Activated CD8-positive, alpha-beta memory T cell treated with anti-CD3 and anti-CD28 coated beads, Interleukin-2, amount 10 ng/mL, durations not matched to agents 7 days and 5 days (primary cell): ENCODE measurements at regions of chr11 and their contacts with region 1.

Region 1: DNA sequence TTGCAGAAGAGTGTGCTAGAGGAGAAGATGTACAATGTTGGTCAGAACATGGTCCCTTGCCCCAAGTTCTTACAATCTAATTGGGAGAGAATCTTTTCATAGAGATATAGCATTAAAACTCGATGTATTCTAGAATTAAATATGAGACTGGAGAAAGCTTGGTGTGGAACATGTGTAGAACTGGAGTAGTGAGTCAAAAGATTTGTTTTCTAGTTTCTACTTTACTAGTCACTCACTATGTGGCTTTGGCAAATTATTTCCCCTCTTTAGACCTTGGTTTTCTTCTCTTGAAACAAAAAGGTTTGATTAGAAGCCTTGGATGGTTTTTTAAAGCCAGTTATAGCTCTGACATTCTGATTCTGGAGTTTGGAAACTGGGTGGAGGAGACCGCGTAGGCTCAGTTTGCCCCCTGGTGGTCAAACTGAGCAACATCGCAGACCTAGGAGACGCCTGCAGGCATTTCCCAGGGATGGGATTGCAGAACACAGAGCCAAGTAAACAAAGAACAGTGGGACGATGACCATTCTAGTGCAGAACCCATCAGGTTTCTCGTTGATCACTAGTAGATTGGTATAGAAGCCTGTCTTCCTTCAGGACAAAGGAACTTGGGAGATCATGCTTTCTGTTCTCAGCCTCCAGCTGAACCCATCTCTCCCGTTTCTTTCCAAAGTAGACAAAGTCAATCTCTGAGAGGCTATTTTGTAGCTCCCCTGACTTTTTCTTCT is 8.5 kb upstream of the CHRDL2 start:
- DNase-seq: peak; percentile 54
- ATAC-seq: peak; percentile 81
- H3K4me3 Mint-ChIP-seq: no peak overlapping the region
- H3K27ac Mint-ChIP-seq: no peak overlapping the region
- H3K4me1 Mint-ChIP-seq: peaks cover 7% of the 10 kb centered on the region
- H3K27me3 Mint-ChIP-seq: peaks cover 33% of the 10 kb centered on the region

Region 2: GRCh38 chr11:74726547-74727182 is 13.0 kb before region 1 on chr11:
- CTCF ChIA-PET with region 1: interaction called, 46 read pairs
- DNase-seq: peak; percentile 71
- ATAC-seq: peak; percentile 97
- H3K4me3 Mint-ChIP-seq: no peak overlapping the region
- H3K27ac Mint-ChIP-seq: no peak overlapping the region
- H3K4me1 Mint-ChIP-seq: peaks cover 3% of the 10 kb centered on the region
- H3K27me3 Mint-ChIP-seq: peaks cover 55% of the 10 kb centered on the region